ENCODE measurements at regions of chr16 and their contacts with region 1.

Region 1: DNA sequence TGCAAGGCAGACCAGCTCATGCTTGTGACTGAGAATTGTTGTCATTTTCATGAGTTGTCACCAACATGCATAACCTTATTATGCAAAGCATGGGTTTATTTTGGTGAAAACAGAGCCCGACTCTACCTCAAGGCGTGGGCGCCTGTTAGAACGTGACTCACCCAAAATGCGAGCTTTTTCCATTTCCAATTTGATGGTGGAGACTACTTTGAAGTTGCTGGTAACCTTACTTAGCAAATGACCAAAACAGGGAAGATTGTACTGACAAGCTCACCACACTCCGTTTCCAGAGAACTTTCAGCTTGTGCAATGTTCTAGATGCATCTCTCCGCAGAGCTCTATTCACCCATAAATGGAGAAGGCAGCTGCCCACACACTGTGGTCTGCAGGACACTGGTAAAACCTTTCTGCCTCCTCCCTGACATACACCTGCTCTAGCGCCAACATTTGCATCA is 284.5 kb downstream of the MAF start:
- DNase-seq: peak; percentile 56
- H3K4me3 Mint-ChIP-seq: peak overlapping the region; percentile 42
- H3K27ac Mint-ChIP-seq: peak overlapping the region; percentile 89
- H3K4me1 Mint-ChIP-seq: peaks cover 44% of the 10 kb centered on the region
- H3K27me3 Mint-ChIP-seq: no peaks in the 10 kb centered on the region

Region 2: DNA sequence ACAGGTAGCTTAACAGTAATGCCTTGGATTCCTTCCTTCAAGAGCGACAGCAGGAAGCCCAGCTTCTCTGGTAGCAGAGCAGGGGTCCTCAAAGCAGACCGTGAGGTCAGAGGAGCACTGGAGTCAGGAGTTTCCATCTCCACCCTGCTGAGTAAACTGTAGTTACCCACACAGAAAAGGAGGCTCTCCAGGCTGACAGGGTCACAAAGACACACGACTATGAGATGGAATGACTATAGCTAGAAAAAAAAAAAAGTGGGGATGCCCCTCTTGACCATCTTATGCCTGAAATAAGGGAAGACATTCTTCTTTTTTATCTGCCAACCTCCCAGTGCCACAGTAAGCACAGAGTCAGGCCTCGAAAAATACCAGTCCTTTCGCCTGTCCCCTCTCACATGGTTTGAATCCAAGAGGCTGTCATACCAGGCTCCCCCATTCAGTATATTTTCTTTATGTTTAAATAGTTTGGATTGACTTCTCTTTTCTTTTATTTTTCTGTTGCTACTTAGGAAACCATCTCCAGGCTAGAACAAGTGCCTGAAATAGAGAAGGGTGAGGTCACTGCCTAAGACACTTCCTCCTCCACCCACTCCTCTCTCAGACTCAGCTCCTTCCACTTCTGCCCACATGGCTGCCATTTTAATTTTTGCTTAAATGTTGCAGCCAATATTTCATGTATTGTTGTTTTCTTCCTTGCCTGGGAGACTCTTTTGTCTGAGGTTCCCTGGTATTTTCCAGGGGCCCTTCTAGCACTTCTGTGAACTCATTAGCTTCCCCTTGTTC is 422.9 kb before region 1 on chr16:
- intact Hi-C with region 1: loop called (anchors 5 kb)
- DNase-seq: no peak
- H3K4me3 Mint-ChIP-seq: no peak overlapping the region
- H3K27ac Mint-ChIP-seq: peak overlapping the region; percentile 34
- H3K4me1 Mint-ChIP-seq: peaks cover 27% of the 10 kb centered on the region
- H3K27me3 Mint-ChIP-seq: no peaks in the 10 kb centered on the region

Region 3: GRCh38 chr16:79089735-79090284 is 226.2 kb before region 1 on chr16:
- intact Hi-C with region 1: loop called (anchors 1 kb)
- DNase-seq: peak; percentile 69
- H3K4me3 Mint-ChIP-seq: peak overlapping the region; percentile 51
- H3K27ac Mint-ChIP-seq: peak overlapping the region; percentile 89
- H3K4me1 Mint-ChIP-seq: peaks cover 53% of the 10 kb centered on the region
- H3K27me3 Mint-ChIP-seq: no peaks in the 10 kb centered on the region

Region 4: GRCh38 chr16:79217375-79218011 is 98.5 kb before region 1 on chr16:
- intact Hi-C with region 1: loop called (anchors 1 kb)
- DNase-seq: peak; percentile 34
- H3K4me3 Mint-ChIP-seq: no peak overlapping the region
- H3K27ac Mint-ChIP-seq: peak overlapping the region; percentile 13
- H3K4me1 Mint-ChIP-seq: peaks cover 32% of the 10 kb centered on the region
- H3K27me3 Mint-ChIP-seq: no peaks in the 10 kb centered on the region

Region 5: DNA sequence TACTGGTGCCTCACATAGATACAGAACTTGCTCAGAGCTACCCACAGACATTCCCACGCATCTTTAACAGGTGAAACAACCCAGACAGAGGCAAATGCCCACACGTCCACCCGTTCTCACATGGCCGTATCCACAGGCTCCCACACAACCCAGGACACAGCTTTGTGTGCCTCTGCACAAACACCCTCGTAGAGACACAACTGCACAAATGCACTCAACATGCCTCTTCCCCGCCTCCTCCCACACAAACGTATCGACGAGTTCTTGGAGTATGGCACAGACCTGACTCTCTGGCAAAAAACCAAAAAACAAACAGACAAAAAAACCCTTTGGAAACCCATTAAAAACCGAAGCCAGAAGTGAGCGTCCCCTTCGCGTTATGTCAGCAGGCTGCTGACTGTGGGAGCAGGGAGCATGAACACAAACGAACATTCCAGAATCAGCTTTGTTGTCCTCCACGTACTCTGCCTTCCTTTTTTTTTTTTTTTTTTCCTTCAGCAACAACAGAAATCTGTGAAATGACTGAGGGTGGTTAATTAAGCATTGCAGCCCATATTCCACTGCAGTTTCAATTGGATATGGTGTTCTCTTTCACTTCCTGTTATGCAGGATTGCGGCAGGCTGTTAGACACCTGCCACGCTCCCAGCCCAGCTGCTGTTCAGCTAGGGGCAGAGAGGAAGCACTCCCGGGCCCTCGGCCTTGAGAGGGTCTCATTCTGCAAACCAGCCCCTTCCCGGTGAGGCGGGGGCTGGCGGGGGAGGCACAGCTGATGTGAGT is 29.2 kb before region 1 on chr16:
- intact Hi-C with region 1: loop called (anchors 2 kb)
- DNase-seq: no peak
- H3K4me3 Mint-ChIP-seq: peak overlapping the region; percentile 2
- H3K27ac Mint-ChIP-seq: peak overlapping the region; percentile 72
- H3K4me1 Mint-ChIP-seq: peaks cover 52% of the 10 kb centered on the region
- H3K27me3 Mint-ChIP-seq: no peaks in the 10 kb centered on the region

Region 6: DNA sequence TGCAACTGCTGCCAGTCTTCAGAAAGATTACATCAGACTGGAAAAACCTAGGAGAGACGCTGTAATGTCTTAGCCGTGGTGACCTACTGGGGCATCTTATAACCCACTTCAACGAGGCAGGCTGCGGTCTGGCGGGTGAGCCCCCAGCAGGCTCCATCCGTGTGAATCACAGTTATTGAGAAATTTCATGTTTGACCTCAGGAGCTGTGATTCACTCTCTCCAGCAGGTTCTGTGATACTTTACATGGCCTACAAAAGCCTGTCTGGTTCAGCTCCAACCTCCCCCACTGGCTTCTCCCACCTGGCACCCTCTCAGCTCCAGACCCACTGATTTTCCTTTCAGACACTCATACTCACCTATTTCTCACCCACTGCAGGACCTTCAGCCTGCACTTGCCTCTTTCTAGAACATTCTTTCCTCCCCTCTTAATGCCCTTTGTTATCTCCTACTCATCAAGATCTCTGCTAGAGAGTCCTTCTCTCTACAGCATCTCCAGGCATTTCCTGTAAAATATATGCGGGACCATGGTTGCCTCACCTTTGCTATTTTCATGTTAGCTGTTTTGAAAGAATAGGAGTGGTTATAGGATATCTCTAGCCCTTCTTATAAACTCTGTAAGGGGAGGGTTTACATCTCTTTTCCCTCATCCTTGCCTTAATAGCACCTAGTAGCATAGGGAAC is 56.6 kb after region 1 on chr16:
- intact Hi-C with region 1: loop called (anchors 1 kb)
- DNase-seq: no peak
- H3K4me3 Mint-ChIP-seq: no peak overlapping the region
- H3K27ac Mint-ChIP-seq: peak overlapping the region; percentile 69
- H3K4me1 Mint-ChIP-seq: peaks cover 15% of the 10 kb centered on the region
- H3K27me3 Mint-ChIP-seq: no peaks in the 10 kb centered on the region

Region 7: DNA sequence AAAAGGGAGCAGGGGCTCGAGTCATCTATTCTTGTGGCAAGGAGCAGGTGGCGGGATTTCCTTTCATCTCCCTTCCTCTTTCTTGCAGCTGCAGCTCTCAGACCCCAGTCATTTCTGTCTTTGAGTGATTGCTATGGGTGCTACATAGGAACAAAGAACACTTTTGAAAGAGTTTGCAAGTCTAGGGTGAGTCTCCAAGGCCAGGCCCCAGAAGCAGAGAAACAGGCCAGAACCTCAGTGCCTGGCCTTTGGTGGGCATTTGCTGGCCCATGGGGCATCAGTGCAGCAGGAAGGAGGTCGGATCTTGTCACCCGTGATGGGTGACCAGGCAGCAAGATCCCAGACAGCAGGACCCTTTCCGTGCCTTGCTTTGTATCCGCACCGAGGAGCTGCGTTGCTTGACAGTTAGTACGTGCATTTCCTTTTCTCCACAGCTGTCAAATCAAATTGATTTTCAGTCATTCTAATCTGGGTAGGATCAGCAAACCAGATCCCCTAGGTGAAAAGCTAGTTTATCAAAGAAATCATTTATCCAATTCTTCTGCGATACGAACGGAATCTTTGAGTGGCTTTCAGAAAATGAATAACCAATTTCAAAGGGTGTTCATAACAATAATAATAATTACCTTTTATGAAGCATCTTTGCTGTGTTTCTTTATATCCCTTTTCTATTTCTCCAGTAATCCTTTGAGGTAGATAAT is 529.2 kb after region 1 on chr16:
- intact Hi-C with region 1: loop called (anchors 1 kb)
- DNase-seq: no peak
- H3K4me3 Mint-ChIP-seq: peak overlapping the region; percentile 39
- H3K27ac Mint-ChIP-seq: peak overlapping the region; percentile 82
- H3K4me1 Mint-ChIP-seq: peaks cover 38% of the 10 kb centered on the region
- H3K27me3 Mint-ChIP-seq: peaks cover 2% of the 10 kb centered on the region